ENCODE measurements at regions of chr15 and their contacts with region 1.

Region 1: DNA sequence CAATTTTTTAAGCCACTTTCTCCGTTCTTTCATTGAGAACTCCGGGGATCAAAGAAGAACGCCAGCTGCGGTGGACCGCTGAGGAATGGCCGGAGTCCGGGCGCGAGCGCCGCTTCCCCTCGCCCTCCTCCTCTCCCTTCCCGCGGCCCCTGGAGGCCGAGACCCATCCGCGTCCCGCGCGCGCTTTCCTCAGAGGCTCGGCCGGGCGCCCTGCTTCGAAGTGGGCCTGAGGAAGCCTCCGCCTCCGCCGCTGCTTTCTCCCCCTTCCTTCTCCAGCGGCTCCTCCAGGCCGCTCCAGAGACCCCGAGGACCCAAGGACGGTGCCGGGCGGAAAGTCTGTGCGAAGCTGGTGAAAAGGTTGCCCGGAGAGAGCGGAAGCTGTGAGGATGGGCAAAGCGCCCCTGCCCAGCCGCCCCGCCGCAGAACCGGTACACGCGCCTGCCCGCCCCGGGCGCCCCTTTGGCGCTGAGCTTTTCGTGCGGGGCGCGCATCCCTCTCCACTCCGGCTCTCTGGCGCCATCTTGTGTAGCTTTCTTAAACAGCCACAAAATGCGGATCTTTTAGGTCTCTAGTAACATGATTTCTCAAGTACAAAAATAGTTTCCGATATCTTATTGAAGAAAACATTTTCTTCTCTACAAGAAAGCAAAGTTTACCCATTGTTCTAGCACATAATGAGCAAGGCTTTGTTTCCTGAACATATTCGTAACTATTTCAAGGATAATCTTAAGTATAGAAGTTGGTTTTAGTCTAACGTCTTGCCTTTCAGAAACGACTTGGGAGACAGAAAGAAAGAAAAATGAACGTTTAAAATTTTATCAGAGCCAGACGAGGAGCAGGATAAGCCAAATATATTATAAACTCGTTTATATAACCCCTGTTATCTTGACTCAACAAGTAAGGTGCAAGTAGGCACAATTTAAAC is 59.2 kb upstream of the FAM174B start:
- DNase-seq: peak; percentile 76 to 77
- H3K4me3 ChIP-seq: peak overlapping the region; percentile 54 to 80
- H3K27ac ChIP-seq: peak overlapping the region; percentile 77 to 84
- H3K4me1 ChIP-seq: peaks cover 0 to 4% (median 0%) of the 10 kb centered on the region in 4 donors
- H3K27me3 ChIP-seq: no peaks in the 10 kb centered on the region
- CTCF ChIP-seq: peak; percentile 91 to 94

Region 2: DNA sequence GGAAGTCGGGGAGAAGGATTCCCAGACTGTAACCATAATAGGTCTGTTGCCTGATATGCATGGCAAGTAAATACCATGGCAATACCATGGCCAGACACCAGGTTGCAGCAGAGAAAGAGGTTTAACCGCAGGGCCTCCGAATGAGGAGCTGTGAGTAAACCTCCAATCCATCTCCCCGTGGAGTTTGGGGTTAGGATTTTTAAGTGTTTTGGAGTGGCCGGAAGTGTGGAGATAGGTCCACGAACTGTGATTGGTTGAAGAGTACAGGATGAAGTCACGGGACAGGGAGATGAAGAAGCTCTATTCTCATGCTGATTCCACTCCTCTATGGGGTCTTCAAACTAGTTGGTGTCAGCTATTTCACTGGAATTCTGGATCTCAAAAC is 193.1 kb before region 1 on chr15:
- intact Hi-C with region 1: loop called (anchors 5 kb)
- DNase-seq: peak; percentile 86
- H3K4me3 ChIP-seq: no peak overlapping the region
- H3K27ac ChIP-seq: no peak overlapping the region
- H3K4me1 ChIP-seq: peaks cover 0 to 3% (median 0%) of the 10 kb centered on the region in 4 donors
- H3K27me3 ChIP-seq: no peaks in the 10 kb centered on the region
- CTCF ChIP-seq: peak; percentile 77 to 90

Region 3: DNA sequence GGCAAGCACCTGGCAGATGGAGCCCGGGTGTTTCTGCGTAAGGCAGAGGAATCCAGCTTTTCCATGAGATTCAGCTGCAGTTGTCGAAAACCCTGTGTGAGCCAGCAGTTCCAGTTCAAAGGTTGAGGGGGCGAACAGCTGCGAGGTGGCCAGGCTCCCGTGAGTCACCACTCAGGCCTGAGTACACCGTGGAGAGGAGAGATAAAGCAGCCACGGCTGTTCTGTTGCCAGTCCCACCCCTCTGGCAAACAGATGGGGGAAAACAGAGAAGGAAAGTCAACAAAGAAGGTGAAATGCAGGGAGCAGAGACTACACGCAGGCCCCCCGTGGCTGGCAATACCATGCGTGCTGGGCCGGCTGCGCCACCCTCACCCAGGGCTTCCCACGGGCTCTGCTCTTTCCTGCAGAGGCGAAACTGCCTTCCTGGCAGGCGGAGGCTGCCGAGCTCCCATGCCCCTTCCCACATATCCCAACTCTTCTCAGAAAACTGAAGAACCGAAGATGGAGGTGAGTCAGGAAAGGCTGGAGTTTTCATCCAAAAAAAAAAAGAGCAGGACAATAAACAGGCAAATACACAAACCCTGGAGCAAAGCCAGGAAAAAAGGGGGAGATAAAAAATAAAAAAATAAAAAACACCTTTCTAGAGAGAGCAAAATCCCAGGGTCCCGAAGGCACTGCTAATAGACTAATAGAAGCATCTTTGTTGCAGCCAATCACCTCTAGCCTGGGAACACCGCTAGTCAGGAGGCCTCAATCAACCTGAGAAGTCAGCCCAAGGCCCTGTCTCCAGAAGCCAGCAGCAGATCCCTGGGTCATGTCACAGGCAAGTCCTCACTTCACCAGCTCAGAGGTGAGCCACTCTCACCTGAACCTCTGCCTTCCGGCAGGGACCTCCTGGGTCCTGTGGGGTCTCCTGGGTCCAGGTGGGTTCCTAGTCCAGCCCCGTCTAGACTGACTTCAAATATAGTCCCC is 96.9 kb before region 1 on chr15:
- intact Hi-C with region 1: loop called (anchors 10 kb)
- DNase-seq: peak; percentile 46 to 63
- H3K4me3 ChIP-seq: no peak overlapping the region
- H3K27ac ChIP-seq: no peak overlapping the region
- H3K4me1 ChIP-seq: peaks cover 0 to 36% (median 10%) of the 10 kb centered on the region in 4 donors
- H3K27me3 ChIP-seq: no peaks in the 10 kb centered on the region
- CTCF ChIP-seq: no peak

Region 4: DNA sequence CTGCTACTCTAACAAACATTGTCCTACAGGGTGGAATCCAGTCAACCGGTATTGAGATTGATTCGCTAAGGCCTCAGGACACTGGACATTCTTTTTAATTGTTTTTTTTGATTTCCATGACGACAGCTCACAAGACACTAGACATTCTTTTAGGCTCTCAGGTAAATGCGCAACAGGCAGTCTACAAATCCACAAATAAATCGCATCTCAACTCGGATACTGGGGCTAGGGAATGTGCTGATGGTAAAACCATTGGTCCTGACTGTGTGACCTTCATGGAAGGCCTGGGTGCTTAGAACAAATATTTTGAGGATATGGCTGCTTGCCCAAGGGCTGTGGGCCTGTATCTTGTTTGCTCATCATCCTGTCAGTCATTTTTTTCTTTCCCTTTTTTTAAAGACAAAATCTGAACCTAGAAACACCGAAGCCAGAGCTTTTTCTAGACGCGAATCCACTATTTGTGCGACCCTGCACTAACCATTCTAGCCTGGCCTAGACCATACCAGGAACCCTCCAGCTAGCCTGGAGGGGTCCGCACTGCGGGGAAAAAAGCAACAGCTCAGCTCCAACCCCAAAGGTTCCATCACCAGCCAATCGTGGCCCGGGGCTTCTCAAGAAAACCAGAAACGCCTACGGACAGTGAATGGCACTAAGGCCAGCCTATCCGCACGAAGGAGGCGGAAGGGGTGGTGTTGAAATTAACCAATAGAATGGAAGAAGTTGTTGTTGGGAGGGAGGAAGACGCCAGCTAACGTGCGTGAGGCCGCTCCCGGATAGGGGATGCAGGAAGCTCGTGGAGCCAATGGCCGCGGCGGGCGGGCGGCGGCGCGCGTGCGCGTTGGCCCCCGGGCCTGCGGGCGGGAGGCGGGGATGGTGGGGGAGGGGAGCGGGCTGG is 167.3 kb after region 1 on chr15:
- intact Hi-C with region 1: no loop called
- DNase-seq: peak; percentile 99 to 100
- H3K4me3 ChIP-seq: peak overlapping the region; percentile 69 to 100
- H3K27ac ChIP-seq: peak overlapping the region; percentile 89 to 100
- H3K4me1 ChIP-seq: peaks cover 0 to 31% (median 7%) of the 10 kb centered on the region in 4 donors
- H3K27me3 ChIP-seq: no peaks in the 10 kb centered on the region
- CTCF ChIP-seq: peak in 1 of 2 experiments; percentile 8